Right ventricle myocardium superior (tissue), 1 donor: ENCODE measurements at regions of chr12 and their contacts with region 1.

Region 1: GRCh38 chr12:6614513-6615172 is 7.5 kb upstream of the CHD4 start:
- DNase-seq: no peak
- ATAC-seq: no peak

Region 2: GRCh38 chr12:6652391-6652790 is 37.7 kb after region 1 on chr12:
- intact Hi-C with region 1: loop called (anchors 5 kb)
- DNase-seq: no peak
- ATAC-seq: no peak